ENCODE measurements at regions of chr6 and their contacts with region 1.

Region 1: GRCh38 chr6:121498481-121499276 is 63.2 kb downstream of the GJA1 start:
- DNase-seq: no peak
- ATAC-seq: peak; percentile 49
- H3K4me3 ChIP-seq: no peak overlapping the region
- H3K27ac ChIP-seq: peak overlapping the region in 1 of 2 donors; percentile 86
- H3K4me1 ChIP-seq: peaks cover 0 to under 1% of the 10 kb centered on the region in 2 donors
- H3K27me3 ChIP-seq: no peaks in the 10 kb centered on the region

Region 2: DNA sequence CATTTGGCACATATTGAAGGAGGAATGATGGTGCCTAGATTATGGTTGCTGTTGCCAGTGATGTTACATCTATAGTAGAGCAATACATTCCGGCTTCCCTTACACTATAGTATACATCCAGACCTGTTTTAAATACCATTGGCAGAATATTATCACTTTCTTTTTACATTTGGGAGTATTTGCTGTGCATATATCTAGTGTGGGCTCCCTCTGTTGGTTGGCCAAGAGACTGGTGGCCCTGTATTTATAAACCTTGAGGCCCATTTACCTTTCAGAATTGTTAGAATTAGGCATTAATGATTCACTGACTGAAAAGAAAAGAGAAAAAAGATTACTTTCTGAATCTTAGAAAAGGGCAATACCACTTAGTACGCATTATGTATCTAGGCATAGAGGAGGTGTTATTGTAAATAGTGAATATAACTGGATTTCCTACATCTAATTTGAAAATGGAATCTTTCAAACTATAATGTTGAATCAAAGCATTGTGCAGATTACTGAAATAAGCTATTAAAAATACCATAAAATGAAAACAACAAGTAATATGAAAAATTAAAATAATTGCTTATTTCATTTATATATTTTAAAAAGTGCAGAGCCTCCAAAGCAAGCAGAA is 1520.3 kb before region 1 on chr6:
- intact Hi-C with region 1: no loop called
- DNase-seq: no peak
- ATAC-seq: no peak
- H3K4me3 ChIP-seq: no peak overlapping the region
- H3K27ac ChIP-seq: no peak overlapping the region
- H3K4me1 ChIP-seq: no peaks in the 10 kb centered on the region
- H3K27me3 ChIP-seq: no peaks in the 10 kb centered on the region

Region 3: GRCh38 chr6:121443971-121444541 is 54.6 kb before region 1 on chr6:
- intact Hi-C with region 1: loop called in 1 of 2 experiments (anchors 10 kb)
- DNase-seq: no peak
- ATAC-seq: no peak
- H3K4me3 ChIP-seq: peak overlapping the region in 1 of 2 donors; percentile 26
- H3K27ac ChIP-seq: peak overlapping the region in 1 of 2 donors; percentile 51
- H3K4me1 ChIP-seq: peaks cover 2 to 6% of the 10 kb centered on the region in 2 donors
- H3K27me3 ChIP-seq: no peaks in the 10 kb centered on the region

Region 4: DNA sequence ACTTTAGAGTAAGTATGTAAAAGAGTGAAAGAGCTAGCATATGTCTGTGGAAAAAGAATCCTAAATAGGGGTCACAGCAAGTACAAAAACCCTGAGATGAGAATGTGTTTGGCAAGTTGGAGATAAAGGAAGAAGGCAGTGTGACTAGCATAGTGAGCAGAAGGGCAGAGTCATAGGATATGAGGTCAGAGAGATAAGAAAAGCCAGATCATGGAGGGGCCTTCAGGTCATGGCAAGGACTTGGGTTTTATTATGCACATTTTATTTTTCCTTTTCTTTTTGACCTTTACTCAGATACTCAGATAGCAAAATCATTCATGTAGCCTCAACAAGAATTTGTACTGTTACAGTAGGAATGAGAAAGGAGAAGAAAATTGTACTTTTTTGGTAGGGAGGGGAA is 74.8 kb after region 1 on chr6:
- intact Hi-C with region 1: no loop called
- DNase-seq: no peak
- ATAC-seq: peak; percentile 68
- H3K4me3 ChIP-seq: no peak overlapping the region
- H3K27ac ChIP-seq: peak overlapping the region in 1 of 2 donors; percentile 43
- H3K4me1 ChIP-seq: no peaks in the 10 kb centered on the region
- H3K27me3 ChIP-seq: no peaks in the 10 kb centered on the region

Region 5: DNA sequence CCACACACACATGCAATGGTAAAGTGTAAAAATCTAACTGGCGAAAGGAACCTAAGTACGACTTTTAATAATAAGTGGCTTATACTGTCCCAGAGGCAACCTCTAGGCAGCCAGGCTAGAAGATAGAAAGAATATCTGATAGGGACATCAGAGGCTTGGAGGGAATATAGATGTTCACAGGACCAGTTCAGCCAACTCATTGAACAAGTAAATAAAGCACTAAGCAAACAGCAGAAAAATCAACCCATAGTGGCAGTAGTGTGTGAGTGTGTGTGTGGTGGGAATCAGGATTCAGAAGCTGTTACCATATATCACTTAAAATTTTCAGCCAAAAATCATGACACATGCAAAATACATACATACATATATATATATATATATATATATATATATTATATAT is 200.9 kb after region 1 on chr6:
- intact Hi-C with region 1: no loop called
- DNase-seq: no peak
- ATAC-seq: no peak
- H3K4me3 ChIP-seq: no peak overlapping the region
- H3K27ac ChIP-seq: no peak overlapping the region
- H3K4me1 ChIP-seq: peaks cover 0 to 3% of the 10 kb centered on the region in 2 donors
- H3K27me3 ChIP-seq: no peaks in the 10 kb centered on the region